Activated CD8-positive, alpha-beta T cell treated with anti-CD3 and anti-CD28 coated beads, Interleukin-2, amount 10 ng/mL, durations not matched to agents 7 days and 5 days (primary cell): ENCODE measurements at regions of chr14 and their contacts with region 1.

Region 1: DNA sequence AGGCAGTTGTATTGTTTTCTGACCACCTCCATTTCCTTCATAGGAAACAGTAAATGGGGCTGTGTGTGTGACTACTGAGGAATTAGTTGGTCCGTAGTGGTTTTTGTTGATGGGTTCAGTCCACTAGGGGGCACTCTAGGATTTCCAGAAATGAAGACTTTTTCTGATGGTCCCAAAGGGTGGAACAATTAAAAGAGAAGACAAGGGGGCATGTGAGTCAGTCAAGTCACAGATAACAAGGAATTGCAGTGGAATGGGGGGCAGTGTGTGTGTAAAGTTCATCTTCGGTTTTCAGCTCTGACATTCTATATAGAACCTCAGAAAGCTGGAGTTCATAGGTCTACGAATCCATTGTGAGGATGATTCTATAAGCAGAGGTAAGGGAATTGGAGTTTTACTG is 186.6 kb upstream of the OR4E1 start:
- DNase-seq: peak; percentile 65
- ATAC-seq: peak; percentile 44
- H3K4me3 Mint-ChIP-seq: peak overlapping the region; percentile 48
- H3K27ac Mint-ChIP-seq: peak overlapping the region; percentile 43
- H3K4me1 Mint-ChIP-seq: peaks cover 4% of the 10 kb centered on the region
- H3K27me3 Mint-ChIP-seq: peaks cover 18% of the 10 kb centered on the region

Region 2: DNA sequence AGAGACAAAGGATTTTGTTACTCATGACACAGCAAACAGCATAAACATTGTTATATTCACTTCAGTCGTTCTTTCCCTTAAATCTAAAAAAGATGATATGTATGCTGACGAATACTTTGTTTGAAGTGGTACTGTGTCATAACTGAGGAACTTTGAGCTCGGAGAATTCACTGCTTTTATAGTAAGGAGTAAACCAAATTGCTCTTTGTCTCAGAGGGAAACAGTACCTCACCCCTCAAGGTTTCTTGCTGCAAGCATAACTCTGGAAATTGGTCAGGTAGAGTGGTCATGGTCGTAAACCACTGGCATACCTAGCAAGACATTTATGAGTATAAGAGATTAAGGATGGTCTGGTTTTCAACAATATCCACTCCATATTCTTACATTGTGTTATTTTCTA is 26.3 kb before region 1 on chr14:
- CTCF ChIA-PET with region 1: no interaction called
- POLR2A ChIA-PET with region 1: no interaction called
- DNase-seq: no peak
- ATAC-seq: no peak
- H3K4me3 Mint-ChIP-seq: no peak overlapping the region
- H3K27ac Mint-ChIP-seq: no peak overlapping the region
- H3K4me1 Mint-ChIP-seq: no peaks in the 10 kb centered on the region
- H3K27me3 Mint-ChIP-seq: peaks cover 26% of the 10 kb centered on the region

Region 3: GRCh38 chr14:21846227-21846885 is 13.8 kb before region 1 on chr14:
- CTCF ChIA-PET with region 1: interaction called, 54 read pairs
- POLR2A ChIA-PET with region 1: interaction called, 10 read pairs
- DNase-seq: peak; percentile 77
- ATAC-seq: peak; percentile 83
- H3K4me3 Mint-ChIP-seq: peak overlapping the region; percentile 71
- H3K27ac Mint-ChIP-seq: peak overlapping the region; percentile 68
- H3K4me1 Mint-ChIP-seq: peaks cover 5% of the 10 kb centered on the region
- H3K27me3 Mint-ChIP-seq: peaks cover 30% of the 10 kb centered on the region

Region 4: DNA sequence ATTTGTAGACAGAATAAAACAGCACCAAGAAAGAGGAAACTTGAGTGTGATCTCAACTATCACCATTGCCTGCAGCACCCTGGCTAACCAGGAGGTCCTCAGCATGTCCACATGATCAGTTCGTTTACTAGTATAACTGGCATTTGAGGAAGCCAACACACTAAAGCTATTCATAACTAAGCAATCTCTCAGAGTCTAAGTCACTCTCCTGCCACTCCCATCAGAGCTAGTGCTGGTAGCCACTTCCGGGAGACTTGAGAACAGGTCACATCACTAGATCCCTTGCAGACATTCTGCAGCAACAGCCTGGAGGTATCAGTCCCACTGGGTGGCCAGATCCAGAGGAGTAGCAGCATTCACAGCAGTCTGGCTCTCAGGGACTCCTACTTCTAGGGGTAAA is 166.4 kb after region 1 on chr14:
- CTCF ChIA-PET with region 1: no interaction called
- POLR2A ChIA-PET with region 1: no interaction called
- DNase-seq: no peak
- ATAC-seq: peak; percentile 58
- H3K4me3 Mint-ChIP-seq: peak overlapping the region; percentile 22
- H3K27ac Mint-ChIP-seq: peak overlapping the region; percentile 61
- H3K4me1 Mint-ChIP-seq: peaks cover 8% of the 10 kb centered on the region
- H3K27me3 Mint-ChIP-seq: peaks cover 7% of the 10 kb centered on the region

Region 5: DNA sequence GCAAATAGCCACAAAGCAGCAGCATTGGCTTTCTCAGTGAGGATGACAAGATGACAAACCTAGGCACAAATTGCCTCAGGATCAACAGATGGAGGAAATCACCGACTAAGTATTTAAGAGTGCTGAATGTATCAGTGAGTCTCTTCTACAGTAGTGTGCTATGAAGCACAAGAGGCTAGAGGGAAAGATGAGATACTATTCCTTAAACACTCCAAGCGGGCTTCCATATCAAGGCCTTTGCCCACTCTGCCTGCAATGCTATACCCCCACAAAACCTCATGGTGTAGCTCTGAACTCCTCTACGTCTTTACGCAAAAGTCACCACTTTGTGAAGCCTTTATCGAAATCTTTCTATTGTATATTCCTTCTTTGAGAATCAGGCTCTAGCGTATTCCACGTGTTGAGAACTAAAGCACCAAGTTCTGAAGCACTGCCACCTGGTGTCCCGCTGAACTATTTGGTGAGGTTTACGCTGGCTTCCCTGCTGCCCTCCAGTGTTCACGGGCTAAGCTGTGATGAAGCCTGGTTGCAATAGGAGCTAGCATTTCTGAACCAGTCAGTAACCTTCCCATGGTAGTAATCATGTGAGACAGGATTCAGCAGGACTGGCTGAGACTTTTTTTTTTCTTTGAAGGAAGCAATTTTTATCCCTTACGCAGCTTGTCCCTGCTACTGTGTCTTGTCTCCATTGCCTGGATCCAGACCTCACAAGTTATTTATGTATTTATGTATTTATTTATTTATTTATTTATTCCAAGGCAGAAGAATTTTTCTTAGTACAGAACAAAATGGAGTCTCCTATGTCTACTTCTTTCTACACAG is 240.0 kb after region 1 on chr14:
- CTCF ChIA-PET with region 1: no interaction called
- POLR2A ChIA-PET with region 1: no interaction called
- DNase-seq: peak; percentile 78
- ATAC-seq: peak; percentile 55
- H3K4me3 Mint-ChIP-seq: no peak overlapping the region
- H3K27ac Mint-ChIP-seq: peak overlapping the region; percentile 44
- H3K4me1 Mint-ChIP-seq: peaks cover 59% of the 10 kb centered on the region
- H3K27me3 Mint-ChIP-seq: no peaks in the 10 kb centered on the region